Caco-2 (cell line): ENCODE measurements at regions of chr14 and their contacts with region 1.

Region 1: GRCh38 chr14:81436296-81437138 is 36.4 kb upstream of the STON2 start:
- DNase-seq: peak; percentile 80 to 92
- H3K4me3 ChIP-seq: peak overlapping the region; percentile 79
- H3K4me3 Mint-ChIP-seq: peak overlapping the region; percentile 95
- H3K27ac Mint-ChIP-seq: peak overlapping the region; percentile 61
- H3K4me1 ChIP-seq: no peaks in the 10 kb centered on the region
- H3K4me1 Mint-ChIP-seq: peaks cover 27% of the 10 kb centered on the region
- H3K27me3 ChIP-seq: no peaks in the 10 kb centered on the region
- H3K27me3 Mint-ChIP-seq: no peaks in the 10 kb centered on the region
- CTCF ChIP-seq: no peak

Region 2: DNA sequence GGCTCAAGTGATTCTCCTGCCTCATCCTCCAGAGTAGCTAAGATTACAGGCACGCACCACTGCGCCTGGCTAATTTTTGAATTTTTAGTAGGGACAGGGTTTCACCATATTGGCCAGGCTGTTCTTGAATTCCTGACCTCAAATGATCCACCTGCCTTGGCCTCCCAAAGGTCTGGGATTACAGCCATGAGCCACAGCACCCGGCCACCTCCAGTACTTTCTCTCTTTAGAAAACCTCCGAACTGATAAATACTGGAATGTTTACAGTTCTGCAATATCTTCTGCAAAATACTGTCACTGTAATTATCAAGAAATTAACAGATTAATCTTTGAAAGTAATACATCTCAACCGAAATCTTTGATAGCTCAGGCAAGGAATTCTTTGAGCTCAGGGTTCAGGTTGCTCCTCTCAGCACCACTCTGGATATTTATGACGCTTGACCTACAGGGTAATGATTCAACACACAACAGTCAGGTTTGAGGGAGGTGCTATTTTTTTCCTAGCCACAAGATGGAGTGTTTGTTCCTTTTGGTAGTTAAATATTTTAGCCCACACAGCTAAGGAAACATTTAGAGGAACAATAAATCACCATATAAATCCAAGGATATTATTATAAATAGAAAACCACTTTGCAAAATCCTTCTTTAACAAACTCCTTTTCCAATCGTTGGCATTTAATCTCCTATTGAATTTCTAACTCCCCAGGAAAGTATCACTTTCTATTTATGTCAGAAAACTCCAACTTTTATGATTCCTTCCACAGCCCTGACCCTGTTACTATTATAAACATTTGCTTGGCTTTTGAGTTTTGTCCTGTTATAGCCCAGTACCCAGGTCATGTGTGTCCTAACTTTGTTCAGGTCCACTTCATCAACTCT is 167.2 kb before region 1 on chr14:
- CTCF ChIA-PET with region 1: interaction called, 18 read pairs
- POLR2A ChIA-PET with region 1: interaction called, 3 read pairs
- intact Hi-C with region 1: loop called (anchors 1 kb)
- DNase-seq: peak; percentile 46 to 69
- H3K4me3 ChIP-seq: no peak overlapping the region
- H3K4me3 Mint-ChIP-seq: no peak overlapping the region
- H3K27ac Mint-ChIP-seq: peak overlapping the region; percentile 42
- H3K4me1 ChIP-seq: peaks cover 11% of the 10 kb centered on the region
- H3K4me1 Mint-ChIP-seq: peaks cover 7% of the 10 kb centered on the region
- H3K27me3 ChIP-seq: no peaks in the 10 kb centered on the region
- H3K27me3 Mint-ChIP-seq: no peaks in the 10 kb centered on the region
- CTCF ChIP-seq: peak; percentile 73 to 75

Region 3: DNA sequence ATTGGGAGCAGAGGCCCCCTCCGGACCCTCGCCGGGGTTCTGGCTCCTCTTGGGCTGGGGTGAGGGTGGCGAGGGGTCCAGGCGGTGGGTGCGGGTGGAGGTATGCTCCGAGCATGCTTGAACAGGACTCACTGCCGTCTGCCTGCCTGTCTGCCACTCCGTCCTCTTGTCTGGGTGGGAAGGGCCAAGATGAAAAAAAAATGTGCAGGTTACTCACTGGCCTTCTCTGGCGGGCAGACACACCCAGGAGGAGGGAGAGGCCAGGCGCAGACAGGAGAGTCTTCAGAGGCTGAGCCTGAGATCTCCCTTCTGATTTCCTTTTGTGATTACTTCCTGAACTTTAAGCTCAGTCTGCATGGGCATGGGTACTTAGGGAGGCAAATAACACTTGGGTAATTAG is 112.5 kb before region 1 on chr14:
- CTCF ChIA-PET with region 1: no interaction called
- POLR2A ChIA-PET with region 1: no interaction called
- intact Hi-C with region 1: loop called (anchors 5 kb)
- DNase-seq: peak; percentile 73 to 80
- H3K4me3 ChIP-seq: peak overlapping the region; percentile 57
- H3K4me3 Mint-ChIP-seq: peak overlapping the region; percentile 77
- H3K27ac Mint-ChIP-seq: peak overlapping the region; percentile 4
- H3K4me1 ChIP-seq: peaks cover 27% of the 10 kb centered on the region
- H3K4me1 Mint-ChIP-seq: peaks cover 24% of the 10 kb centered on the region
- H3K27me3 ChIP-seq: no peaks in the 10 kb centered on the region
- H3K27me3 Mint-ChIP-seq: no peaks in the 10 kb centered on the region
- CTCF ChIP-seq: peak in 1 of 2 experiments; percentile 3

Region 4: GRCh38 chr14:81408595-81408994 is 27.9 kb before region 1 on chr14:
- CTCF ChIA-PET with region 1: no interaction called
- POLR2A ChIA-PET with region 1: no interaction called
- intact Hi-C with region 1: loop called (anchors 2 kb)
- DNase-seq: peak; percentile 59 to 62
- H3K4me3 ChIP-seq: no peak overlapping the region
- H3K4me3 Mint-ChIP-seq: no peak overlapping the region
- H3K27ac Mint-ChIP-seq: no peak overlapping the region
- H3K4me1 ChIP-seq: no peaks in the 10 kb centered on the region; the same call in 1 of the 2 replicates
- H3K4me1 Mint-ChIP-seq: peaks cover 6% of the 10 kb centered on the region
- H3K27me3 ChIP-seq: no peaks in the 10 kb centered on the region
- H3K27me3 Mint-ChIP-seq: no peaks in the 10 kb centered on the region
- CTCF ChIP-seq: no peak